SK-N-SH (cell line): ENCODE measurements at regions of chr2 and their contacts with region 1.

Region 1: GRCh38 chr2:97792416-97792815 is 79.0 kb downstream of the ZAP70 start:
- DNase-seq: no peak
- H3K4me3 ChIP-seq: no peak overlapping the region
- H3K27ac ChIP-seq: no peak overlapping the region
- H3K4me1 ChIP-seq: peaks cover 0 to 2% of the 10 kb centered on the region in 2 experiments; a peak in 1 of 4 replicates
- H3K27me3 ChIP-seq: no peaks in the 10 kb centered on the region
- CTCF ChIP-seq: no peak
- EP300 ChIP-seq: no peak
- RAD21 ChIP-seq: no peak

Region 2: GRCh38 chr2:97806738-97807618 is 14.6 kb after region 1 on chr2:
- CTCF ChIA-PET with region 1: interaction called, 19 read pairs
- POLR2A ChIA-PET with region 1: no interaction called
- DNase-seq: peak; percentile 74
- H3K4me3 ChIP-seq: no peak overlapping the region; a peak in 1 of 4 replicates
- H3K27ac ChIP-seq: no peak overlapping the region
- H3K4me1 ChIP-seq: no peaks in the 10 kb centered on the region
- H3K27me3 ChIP-seq: no peaks in the 10 kb centered on the region
- CTCF ChIP-seq: peak; percentile 92
- EP300 ChIP-seq: no peak
- RAD21 ChIP-seq: peak; percentile 95